ENCODE measurements at regions of chr12 and their contacts with region 1.

Region 1: GRCh38 chr12:76037130-76038103 is 5.8 kb upstream of the PHLDA1 start:
- DNase-seq: no peak
- H3K4me3 ChIP-seq: no peak overlapping the region
- H3K27ac ChIP-seq: no peak overlapping the region
- H3K4me1 ChIP-seq: no peaks in the 10 kb centered on the region
- H3K27me3 ChIP-seq: no peaks in the 10 kb centered on the region
- CTCF ChIP-seq: peak; percentile 70 to 85 (median 84)

Region 2: GRCh38 chr12:75511116-75512048 is 526.0 kb before region 1 on chr12 and contains the start of gene KRR1:
- intact Hi-C with region 1: loop called (anchors 5 kb)
- DNase-seq: peak; percentile 68 to 96
- H3K4me3 ChIP-seq: peak within 1 kb of the TSS; percentile 87 to 90
- H3K27ac ChIP-seq: peak within 1 kb of the TSS; percentile 73 to 81
- H3K4me1 ChIP-seq: peaks cover 3 to 12% of the 10 kb centered on the region in 2 donors
- H3K27me3 ChIP-seq: no peaks in the 10 kb centered on the region
- CTCF ChIP-seq: no peak
- total RNA-seq, gene KRR1: 23.9 TPM

Region 3: DNA sequence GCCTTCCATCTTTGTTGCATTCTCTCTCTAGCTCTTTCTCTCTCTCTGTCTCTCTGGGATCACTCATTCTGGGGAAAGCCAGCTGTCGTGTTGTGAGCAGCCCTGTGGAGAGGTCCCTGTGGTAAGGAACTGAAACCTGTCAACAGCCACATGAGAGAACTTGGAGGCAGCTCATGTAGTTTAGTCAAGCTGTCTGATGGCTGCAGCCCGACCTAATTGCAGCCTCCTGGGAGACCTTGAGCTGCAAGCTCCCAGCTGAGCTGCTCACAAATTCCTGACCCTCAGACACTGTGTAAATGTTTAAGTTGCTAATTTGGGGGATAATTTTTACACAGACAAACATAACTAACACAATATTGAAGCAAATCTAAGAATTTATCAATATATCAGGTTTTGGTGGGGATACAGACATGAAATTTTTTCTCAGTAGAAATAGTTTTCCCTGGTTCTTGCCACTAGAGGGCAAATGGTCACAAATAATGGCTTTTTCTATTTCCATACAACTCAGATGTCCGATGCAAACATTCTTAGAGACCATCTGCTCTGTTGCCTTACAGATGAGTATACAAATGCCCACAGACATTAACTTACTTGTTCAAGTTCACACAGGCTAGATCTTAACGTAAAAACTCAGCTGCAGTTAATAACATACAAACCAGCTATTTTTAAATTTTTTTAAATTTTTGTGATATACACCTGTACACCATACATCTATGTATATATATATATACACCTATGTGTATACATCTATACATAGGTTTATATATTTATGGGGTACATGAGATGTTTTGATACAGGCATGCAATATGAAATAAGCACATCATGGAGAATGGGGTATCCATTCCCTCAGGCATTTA is 510.5 kb before region 1 on chr12:
- intact Hi-C with region 1: loop called (anchors 1 kb)
- DNase-seq: no peak
- H3K4me3 ChIP-seq: no peak overlapping the region
- H3K27ac ChIP-seq: no peak overlapping the region
- H3K4me1 ChIP-seq: no peaks in the 10 kb centered on the region
- H3K27me3 ChIP-seq: no peaks in the 10 kb centered on the region
- CTCF ChIP-seq: peak; percentile 37 to 72 (median 37)

Region 4: GRCh38 chr12:75738486-75738885 is 298.9 kb before region 1 on chr12:
- intact Hi-C with region 1: no loop called
- DNase-seq: no peak
- H3K4me3 ChIP-seq: no peak overlapping the region
- H3K27ac ChIP-seq: no peak overlapping the region
- H3K4me1 ChIP-seq: no peaks in the 10 kb centered on the region
- H3K27me3 ChIP-seq: no peaks in the 10 kb centered on the region
- CTCF ChIP-seq: no peak

Region 5: GRCh38 chr12:76544601-76545261 is 507.3 kb after region 1 on chr12:
- intact Hi-C with region 1: no loop called
- DNase-seq: no peak
- H3K4me3 ChIP-seq: no peak overlapping the region
- H3K27ac ChIP-seq: no peak overlapping the region
- H3K4me1 ChIP-seq: peaks cover 4 to 15% of the 10 kb centered on the region in 2 donors
- H3K27me3 ChIP-seq: no peaks in the 10 kb centered on the region
- CTCF ChIP-seq: no peak

Measured in ascending aorta (tissue), 2 donors.